Right ventricle myocardium inferior (tissue), 1 donor: ENCODE measurements at regions of chr16 and their contacts with region 1.

Region 1: GRCh38 chr16:89641458-89642119 is 15.9 kb downstream of the CHMP1A start:
- DNase-seq: peak; percentile 30
- ATAC-seq: no peak

Region 2: GRCh38 chr16:89401641-89402445 is 239.7 kb before region 1 on chr16:
- intact Hi-C with region 1: no loop called
- DNase-seq: no peak
- ATAC-seq: no peak

Region 3: GRCh38 chr16:89574681-89575246 is 66.8 kb before region 1 on chr16:
- intact Hi-C with region 1: loop called (anchors 10 kb)
- DNase-seq: no peak
- ATAC-seq: peak; percentile 51